Panc1 (cell line): ENCODE measurements at regions of chr12 and their contacts with region 1.

Region 1: GRCh38 chr12:64780531-64781279 is 21.5 kb upstream of the GNS start:
- DNase-seq: no peak
- ATAC-seq: peak; percentile 87
- H3K4me3 ChIP-seq: peak overlapping the region; percentile 45 to 73
- H3K27ac ChIP-seq: no peak overlapping the region
- H3K4me1 ChIP-seq: no peaks in the 10 kb centered on the region; the same call in 1 of the 2 replicates
- H3K27me3 ChIP-seq: peaks cover 22% of the 10 kb centered on the region
- CTCF ChIP-seq: peak; percentile 11

Region 2: GRCh38 chr12:64596252-64596793 is 184.4 kb before region 1 on chr12:
- CTCF ChIA-PET with region 1: interaction called, 11 read pairs
- POLR2A ChIA-PET with region 1: no interaction called
- in situ Hi-C with region 1: no loop called
- intact Hi-C with region 1: no loop called
- DNase-seq: no peak
- ATAC-seq: no peak
- H3K4me3 ChIP-seq: no peak overlapping the region
- H3K27ac ChIP-seq: no peak overlapping the region
- H3K4me1 ChIP-seq: no peaks in the 10 kb centered on the region; the same call in 1 of the 2 replicates
- H3K27me3 ChIP-seq: no peaks in the 10 kb centered on the region
- CTCF ChIP-seq: no peak

Region 3: GRCh38 chr12:65287426-65287825 is 506.7 kb after region 1 on chr12:
- CTCF ChIA-PET with region 1: no interaction called
- POLR2A ChIA-PET with region 1: interaction called, 11 read pairs
- in situ Hi-C with region 1: no loop called
- intact Hi-C with region 1: no loop called
- DNase-seq: no peak
- ATAC-seq: no peak
- H3K4me3 ChIP-seq: no peak overlapping the region
- H3K27ac ChIP-seq: no peak overlapping the region
- H3K4me1 ChIP-seq: peaks cover 3% of the 10 kb centered on the region; the same call in 1 of the 2 replicates
- H3K27me3 ChIP-seq: no peaks in the 10 kb centered on the region
- CTCF ChIP-seq: no peak